ENCODE measurements at regions of chr5 and their contacts with region 1.

Region 1: GRCh38 chr5:133944263-133945185 is 23.9 kb downstream of the C5orf15 start:
- DNase-seq: no peak
- ATAC-seq: peak; percentile 33 to 67

Region 2: DNA sequence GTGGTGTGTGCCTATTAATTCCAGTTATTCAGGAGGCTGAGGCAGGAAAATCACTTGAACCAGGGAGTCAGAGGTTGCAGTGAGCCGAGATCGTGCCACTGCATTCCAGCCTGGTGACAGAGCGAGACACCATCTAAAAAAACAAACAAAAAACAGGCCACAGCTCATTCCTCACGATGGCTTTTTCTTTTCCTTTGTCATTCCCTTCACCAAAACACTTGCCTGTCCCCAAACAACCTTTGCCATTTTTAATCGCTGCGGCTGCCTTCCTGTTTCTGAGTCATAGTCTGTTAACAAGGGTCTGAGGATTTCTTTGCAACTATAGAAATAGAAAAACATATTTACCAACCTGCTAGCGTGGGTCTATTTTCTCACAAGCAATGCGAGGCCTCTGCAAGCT is 209.2 kb before region 1 on chr5:
- intact Hi-C with region 1: no loop called
- DNase-seq: no peak
- ATAC-seq: no peak

Region 3: DNA sequence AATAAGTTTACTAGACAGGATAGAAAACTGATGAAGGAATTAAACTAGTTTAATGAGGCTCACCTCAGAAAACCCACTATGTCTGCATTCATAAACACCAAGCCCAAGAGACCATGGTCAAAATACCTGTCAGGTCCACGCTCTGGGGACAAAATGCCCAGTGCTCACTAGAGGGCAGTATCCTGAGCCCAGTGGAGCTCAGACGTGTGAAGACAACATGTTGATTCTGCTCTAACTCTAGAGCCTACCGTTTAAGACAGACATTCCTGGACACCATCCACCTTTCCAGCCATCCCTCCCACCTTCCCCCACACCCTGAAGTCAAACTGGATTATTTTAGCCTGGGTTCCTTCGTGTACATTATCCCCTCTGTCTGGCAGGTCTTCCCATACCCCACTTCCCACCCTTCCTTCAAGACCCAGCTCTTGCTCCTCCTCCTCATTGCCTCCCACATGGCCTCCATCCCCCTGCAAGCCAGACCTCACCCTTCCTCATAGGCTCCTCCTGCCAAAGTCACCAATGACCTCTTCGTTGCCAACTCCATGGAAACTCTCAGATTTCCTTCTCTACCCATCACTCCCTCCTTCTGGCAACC is 189.9 kb before region 1 on chr5:
- intact Hi-C with region 1: loop called in 1 of 2 experiments (anchors 10 kb)
- DNase-seq: no peak
- ATAC-seq: peak; percentile 50 to 57

Region 4: GRCh38 chr5:134225618-134226440 is 281.3 kb after region 1 on chr5 and contains the start of gene PPP2CA:
- intact Hi-C with region 1: no loop called
- DNase-seq: peak; percentile 99
- ATAC-seq: peak; percentile 95 to 96
- total RNA-seq, gene PPP2CA: 115 to 157 TPM